ENCODE measurements at regions of chr10 and their contacts with region 1.

Region 1: DNA sequence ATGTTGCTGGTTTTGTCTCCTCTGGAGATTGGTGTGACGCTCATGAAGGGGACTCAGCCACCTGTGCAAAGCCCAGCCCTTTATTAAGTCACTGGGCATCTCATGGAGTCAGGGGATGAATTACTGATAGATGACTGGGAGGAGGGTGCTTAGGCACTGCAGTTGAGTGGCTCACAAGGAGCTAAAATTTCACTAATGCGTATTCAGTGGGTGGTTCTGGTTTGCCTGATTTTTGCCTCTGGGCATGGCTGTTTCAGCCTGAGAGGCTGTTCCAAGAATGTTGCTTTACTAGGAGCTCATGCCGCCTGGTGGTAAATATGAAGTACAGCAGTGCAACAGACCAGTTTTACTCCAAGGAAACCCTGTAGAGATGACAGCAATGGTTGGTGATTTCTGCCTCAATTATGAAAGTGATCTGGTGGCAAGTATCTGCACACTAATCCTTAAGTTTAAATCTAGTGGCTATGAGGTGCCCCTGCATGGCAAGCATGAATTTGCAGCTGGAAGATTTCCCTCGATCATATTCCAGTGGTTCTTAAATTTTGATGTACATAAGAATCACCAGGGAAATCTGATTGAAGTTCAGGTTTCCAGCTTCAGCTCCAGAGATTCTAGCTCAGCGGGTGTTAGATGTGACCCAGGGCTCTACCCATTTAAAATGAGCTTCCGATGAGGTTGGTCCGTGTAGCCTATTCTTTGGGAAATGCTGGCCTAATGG is 19.9 kb downstream of the ACTA2 start:
- DNase-seq: peak; percentile 47
- H3K4me3 Mint-ChIP-seq: no peak overlapping the region
- H3K27ac Mint-ChIP-seq: no peak overlapping the region
- H3K4me1 Mint-ChIP-seq: peaks cover 24% of the 10 kb centered on the region
- H3K27me3 Mint-ChIP-seq: no peaks in the 10 kb centered on the region

Region 2: GRCh38 chr10:88728107-88728763 is 204.5 kb before region 1 on chr10:
- CTCF ChIA-PET with region 1: interaction called, 26 read pairs
- DNase-seq: peak; percentile 62
- H3K4me3 Mint-ChIP-seq: no peak overlapping the region
- H3K27ac Mint-ChIP-seq: no peak overlapping the region
- H3K4me1 Mint-ChIP-seq: peaks cover 3% of the 10 kb centered on the region
- H3K27me3 Mint-ChIP-seq: peaks cover 11% of the 10 kb centered on the region

Region 3: DNA sequence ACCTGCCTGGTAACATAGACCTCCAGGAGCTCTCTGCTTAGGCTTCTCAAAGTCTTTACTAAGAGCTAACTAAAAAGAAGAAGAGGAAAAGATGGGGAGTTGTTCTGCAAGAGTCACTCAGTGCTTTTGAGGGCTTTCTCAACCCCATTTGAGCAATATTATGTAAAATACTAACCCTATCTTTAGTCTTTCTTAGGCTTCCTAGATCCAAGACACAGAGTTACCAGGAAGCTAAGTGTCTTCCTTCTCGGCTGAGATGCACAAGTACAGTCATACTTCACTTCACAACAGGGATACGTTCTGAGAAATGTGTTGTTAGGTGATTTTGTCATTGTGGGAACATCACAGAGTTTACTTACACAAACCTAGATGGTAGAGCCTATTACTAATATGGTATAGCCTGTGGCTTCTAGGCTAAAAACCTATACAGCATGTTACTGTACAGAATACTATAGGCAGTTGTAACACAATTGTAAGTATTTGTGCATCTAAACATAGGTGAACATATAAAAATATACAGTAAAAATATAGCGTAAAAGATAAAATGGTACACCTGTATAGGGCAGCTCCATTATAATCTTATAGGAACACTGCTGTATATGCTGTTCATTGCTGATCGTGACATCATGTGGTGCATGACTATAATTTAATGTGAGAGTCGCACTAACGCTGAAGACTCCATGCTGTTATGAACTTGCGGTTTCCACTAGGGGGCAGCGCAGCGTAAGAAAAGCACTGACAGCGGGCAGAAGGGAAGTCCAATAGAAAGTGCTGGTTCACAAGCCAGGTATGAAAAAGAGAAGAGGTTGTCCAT is 97.4 kb before region 1 on chr10:
- CTCF ChIA-PET with region 1: interaction called, 275 read pairs
- DNase-seq: peak; percentile 92
- H3K4me3 Mint-ChIP-seq: no peak overlapping the region
- H3K27ac Mint-ChIP-seq: no peak overlapping the region
- H3K4me1 Mint-ChIP-seq: peaks cover 34% of the 10 kb centered on the region
- H3K27me3 Mint-ChIP-seq: no peaks in the 10 kb centered on the region

Region 4: GRCh38 chr10:88944813-88945212 is 12.1 kb after region 1 on chr10:
- CTCF ChIA-PET with region 1: interaction called, 21 read pairs
- DNase-seq: no peak
- H3K4me3 Mint-ChIP-seq: no peak overlapping the region
- H3K27ac Mint-ChIP-seq: no peak overlapping the region
- H3K4me1 Mint-ChIP-seq: peaks cover 17% of the 10 kb centered on the region
- H3K27me3 Mint-ChIP-seq: no peaks in the 10 kb centered on the region

Region 5: GRCh38 chr10:88958721-88959120 is 26.0 kb after region 1 on chr10:
- CTCF ChIA-PET with region 1: no interaction called
- DNase-seq: no peak
- H3K4me3 Mint-ChIP-seq: no peak overlapping the region
- H3K27ac Mint-ChIP-seq: no peak overlapping the region
- H3K4me1 Mint-ChIP-seq: peaks cover 32% of the 10 kb centered on the region
- H3K27me3 Mint-ChIP-seq: no peaks in the 10 kb centered on the region

Region 6: DNA sequence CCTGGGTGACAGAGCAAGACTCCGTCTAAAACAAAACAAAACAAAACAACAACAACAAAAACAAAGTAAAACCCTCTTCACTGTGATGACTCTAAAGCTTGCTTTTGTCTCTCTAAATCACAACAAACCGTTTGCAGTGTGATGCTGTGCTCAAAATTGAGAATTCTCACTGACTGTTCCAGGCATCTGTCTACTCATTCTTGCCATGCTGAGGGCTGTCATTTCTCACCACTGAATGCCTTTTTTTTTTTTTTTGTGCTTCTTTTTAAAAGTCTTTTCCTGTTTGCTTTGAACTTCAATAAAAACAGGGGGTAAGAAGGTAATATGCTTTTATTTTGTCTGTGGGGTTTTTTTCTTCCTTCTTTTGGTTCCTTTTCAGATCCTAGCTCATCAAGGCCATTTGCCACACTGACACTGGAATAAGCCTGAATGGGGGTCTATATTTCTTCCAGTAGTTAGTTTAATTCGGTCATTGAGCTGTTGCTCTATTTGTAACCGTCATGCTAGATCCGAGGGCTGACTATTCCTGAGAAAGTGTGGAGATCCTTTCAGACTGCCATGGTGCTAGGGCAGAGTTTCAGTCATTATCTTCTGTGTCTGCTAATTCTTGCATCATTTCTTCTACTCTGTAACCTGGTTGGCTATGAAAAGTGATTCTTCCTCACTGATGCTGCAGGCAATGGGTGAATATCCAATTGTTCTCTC is 68.5 kb after region 1 on chr10:
- CTCF ChIA-PET with region 1: interaction called, 12 read pairs
- DNase-seq: no peak
- H3K4me3 Mint-ChIP-seq: peak overlapping the region; percentile 3
- H3K27ac Mint-ChIP-seq: peak overlapping the region; percentile 79
- H3K4me1 Mint-ChIP-seq: peaks cover 75% of the 10 kb centered on the region
- H3K27me3 Mint-ChIP-seq: no peaks in the 10 kb centered on the region

Region 7: GRCh38 chr10:89029785-89030437 is 97.2 kb after region 1 on chr10:
- CTCF ChIA-PET with region 1: interaction called, 41 read pairs
- DNase-seq: peak; percentile 81
- H3K4me3 Mint-ChIP-seq: no peak overlapping the region
- H3K27ac Mint-ChIP-seq: no peak overlapping the region
- H3K4me1 Mint-ChIP-seq: peaks cover 11% of the 10 kb centered on the region
- H3K27me3 Mint-ChIP-seq: peaks cover 2% of the 10 kb centered on the region

Region 8: GRCh38 chr10:89217057-89217990 is 284.6 kb after region 1 on chr10:
- CTCF ChIA-PET with region 1: interaction called, 48 read pairs
- DNase-seq: peak; percentile 71
- H3K4me3 Mint-ChIP-seq: no peak overlapping the region
- H3K27ac Mint-ChIP-seq: peak overlapping the region; percentile 64
- H3K4me1 Mint-ChIP-seq: peaks cover 13% of the 10 kb centered on the region
- H3K27me3 Mint-ChIP-seq: no peaks in the 10 kb centered on the region

Measured in activated naive CD4-positive, alpha-beta T cell treated with anti-CD3 and anti-CD28 coated beads, Interleukin-2, amount 10 ng/mL, durations not matched to agents 7 days and 5 days (primary cell).